ENCODE measurements at regions of chr19 and their contacts with region 1.

Region 1: GRCh38 chr19:56252699-56253422 is 19.7 kb upstream of the EDDM13 start:
- DNase-seq: peak; percentile 75 to 88 (median 87)
- ATAC-seq: peak; percentile 76 to 83
- H3K4me3 ChIP-seq: no peak overlapping the region
- H3K27ac ChIP-seq: no peak overlapping the region
- H3K4me1 ChIP-seq: no peaks in the 10 kb centered on the region
- H3K27me3 ChIP-seq: no peaks in the 10 kb centered on the region

Region 2: GRCh38 chr19:56066152-56067023 is 186.5 kb before region 1 on chr19:
- intact Hi-C with region 1: loop called in 1 of 4 experiments (anchors 5 kb)
- DNase-seq: peak; percentile 69 to 84 (median 82)
- ATAC-seq: peak; percentile 71 to 88
- H3K4me3 ChIP-seq: no peak overlapping the region
- H3K27ac ChIP-seq: no peak overlapping the region
- H3K4me1 ChIP-seq: no peaks in the 10 kb centered on the region
- H3K27me3 ChIP-seq: no peaks in the 10 kb centered on the region

Region 3: DNA sequence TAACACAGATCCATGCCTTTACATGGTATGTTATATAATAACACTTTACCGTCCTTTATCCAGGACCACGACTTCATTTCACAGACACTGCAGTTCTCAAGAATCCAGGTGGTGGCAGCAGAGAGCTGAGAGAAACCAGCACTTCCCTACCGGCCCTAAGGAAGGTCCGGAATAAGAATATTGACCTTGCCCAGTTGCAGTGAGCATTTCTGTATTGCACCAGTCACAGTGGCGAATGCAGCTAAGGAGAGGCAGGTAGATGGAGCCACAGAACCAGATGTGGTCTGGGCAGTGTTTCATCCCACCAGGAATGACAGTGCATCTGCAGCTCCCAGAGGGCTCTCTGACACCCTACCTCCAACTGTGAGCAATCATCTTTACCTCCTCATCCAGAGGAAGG is 176.4 kb before region 1 on chr19:
- intact Hi-C with region 1: loop called in 2 of 4 experiments (anchors 5 kb)
- DNase-seq: peak in 2 of 3 donors; percentile 65 to 79
- ATAC-seq: peak; percentile 44 to 59
- H3K4me3 ChIP-seq: no peak overlapping the region
- H3K27ac ChIP-seq: no peak overlapping the region
- H3K4me1 ChIP-seq: no peaks in the 10 kb centered on the region
- H3K27me3 ChIP-seq: no peaks in the 10 kb centered on the region

Region 4: DNA sequence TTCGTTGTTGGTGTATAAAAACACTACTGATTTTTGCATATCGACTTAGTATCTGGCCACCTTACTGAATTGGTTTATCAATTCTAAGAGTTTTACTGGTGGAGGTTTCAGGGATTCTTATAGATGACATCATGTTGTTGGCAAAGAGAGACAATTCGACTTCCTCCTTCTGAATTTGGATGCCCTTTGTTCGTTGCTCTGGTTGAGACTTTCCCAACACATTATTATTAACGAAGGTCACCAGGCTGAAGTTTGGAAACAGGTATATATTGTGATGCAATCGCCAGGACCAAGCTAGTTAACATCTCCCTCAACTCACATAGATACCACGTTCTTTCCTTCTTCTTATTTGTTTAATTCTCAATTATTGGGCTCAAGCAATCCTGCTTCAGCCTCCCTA is 53.2 kb before region 1 on chr19:
- intact Hi-C with region 1: no loop called
- DNase-seq: no peak
- ATAC-seq: no peak
- H3K4me3 ChIP-seq: no peak overlapping the region
- H3K27ac ChIP-seq: no peak overlapping the region
- H3K4me1 ChIP-seq: no peaks in the 10 kb centered on the region
- H3K27me3 ChIP-seq: no peaks in the 10 kb centered on the region

Region 5: DNA sequence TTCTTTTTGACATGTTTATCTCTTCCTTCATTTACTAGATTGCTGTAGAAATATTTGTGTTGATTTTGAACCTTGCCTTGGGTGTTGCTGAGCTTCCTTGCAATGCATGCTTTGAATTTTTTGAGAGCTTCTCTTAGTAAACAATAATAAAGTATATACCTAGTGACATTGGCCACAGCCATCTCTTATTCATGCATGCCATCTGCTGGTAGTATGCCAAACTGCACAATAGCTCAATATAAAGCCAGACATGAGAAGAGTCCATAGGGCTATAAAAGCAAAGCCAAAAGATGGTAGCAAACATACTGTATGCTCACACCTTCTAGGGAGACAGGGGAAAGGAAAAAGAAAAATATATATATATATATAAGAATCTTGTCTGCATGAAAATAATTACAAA is 80.6 kb after region 1 on chr19:
- intact Hi-C with region 1: loop called in 2 of 4 experiments (anchors 5 to 10 kb)
- DNase-seq: no peak
- ATAC-seq: peak in 1 of 2 donors; percentile 39
- H3K4me3 ChIP-seq: no peak overlapping the region
- H3K27ac ChIP-seq: no peak overlapping the region
- H3K4me1 ChIP-seq: no peaks in the 10 kb centered on the region
- H3K27me3 ChIP-seq: no peaks in the 10 kb centered on the region

Region 6: DNA sequence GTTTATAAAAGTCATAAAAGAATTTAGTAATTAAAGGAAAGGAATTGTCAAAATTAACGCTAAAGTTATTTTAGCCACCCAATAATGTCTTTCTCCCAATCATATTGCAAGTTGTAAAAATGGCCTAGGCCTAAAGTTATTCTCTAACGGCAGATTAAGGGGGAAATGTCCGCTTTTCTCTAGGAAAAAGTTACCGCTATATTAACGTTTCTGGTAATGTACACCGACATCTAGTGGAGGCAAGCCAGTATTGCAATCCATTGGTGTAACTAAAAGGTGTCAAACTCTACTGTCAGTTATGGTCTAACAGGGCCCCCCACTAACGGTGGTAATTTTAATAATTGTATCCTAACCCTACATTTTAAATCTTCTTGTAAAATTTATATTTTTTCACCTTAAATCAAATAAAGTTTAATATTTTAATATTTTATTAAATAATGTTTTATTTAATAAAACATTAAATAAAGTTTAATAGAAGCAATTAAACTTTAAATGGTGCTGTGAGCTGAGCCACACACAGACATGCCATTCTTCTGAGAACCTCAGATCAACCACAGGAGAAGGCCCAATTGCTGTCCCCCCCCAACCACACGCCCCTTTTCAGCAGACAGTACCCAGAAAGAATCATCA is 97.7 kb after region 1 on chr19:
- intact Hi-C with region 1: loop called in 2 of 4 experiments (anchors 5 kb)
- DNase-seq: peak in 1 of 3 donors; percentile 48
- ATAC-seq: peak in 1 of 2 donors; percentile 55
- H3K4me3 ChIP-seq: no peak overlapping the region
- H3K27ac ChIP-seq: no peak overlapping the region
- H3K4me1 ChIP-seq: no peaks in the 10 kb centered on the region
- H3K27me3 ChIP-seq: no peaks in the 10 kb centered on the region